ENCODE measurements at regions of chr2 and their contacts with region 1.

Region 1: GRCh38 chr2:30711646-30712085 is 95.6 kb downstream of the CAPN13 start:
- DNase-seq: peak; percentile 57 to 93 (median 81)
- ATAC-seq: peak; percentile 83 to 92 (median 87)
- H3K4me3 ChIP-seq: no peak overlapping the region
- H3K4me3 Mint-ChIP-seq: no peak overlapping the region
- H3K27ac ChIP-seq: no peak overlapping the region
- H3K27ac Mint-ChIP-seq: no peak overlapping the region
- H3K4me1 ChIP-seq: peaks cover 0 to 12% of the 10 kb centered on the region in 2 experiments
- H3K4me1 Mint-ChIP-seq: peaks cover 0 to 5% (median 5%) of the 10 kb centered on the region in 3 donors
- H3K27me3 ChIP-seq: peaks cover 0 to 16% of the 10 kb centered on the region in 2 experiments
- H3K27me3 Mint-ChIP-seq: peaks cover 0 to 2% of the 10 kb centered on the region in 2 donors

Region 2: GRCh38 chr2:30146438-30147147 is 565.1 kb before region 1 on chr2 and contains the start of gene YPEL5:
- CTCF ChIA-PET with region 1: interaction called in 1 of 2 experiments, 14 read pairs
- POLR2A ChIA-PET with region 1: interaction called in 1 of 2 experiments, 3 read pairs
- DNase-seq: peak; percentile 97 to 100 (median 100)
- ATAC-seq: peak; percentile 85 to 90 (median 88)
- H3K4me3 ChIP-seq: peak within 1 kb of the TSS; percentile 67 to 77
- H3K4me3 Mint-ChIP-seq: peak within 1 kb of the TSS; percentile 83 to 94 (median 84)
- H3K27ac ChIP-seq: peak within 1 kb of the TSS; percentile 99
- H3K27ac Mint-ChIP-seq: peak within 1 kb of the TSS; percentile 99 to 100
- H3K4me1 ChIP-seq: peaks cover 22 to 36% of the 10 kb centered on the region in 2 experiments
- H3K4me1 Mint-ChIP-seq: peaks cover 56 to 61% (median 58%) of the 10 kb centered on the region in 3 donors
- H3K27me3 ChIP-seq: no peaks in the 10 kb centered on the region
- H3K27me3 Mint-ChIP-seq: no peaks in the 10 kb centered on the region
- total RNA-seq, gene YPEL5: 73.0 to 962 (median 77.3) TPM

Region 3: GRCh38 chr2:30208452-30208851 is 503.2 kb before region 1 on chr2:
- CTCF ChIA-PET with region 1: interaction called, 9 to 65 read pairs
- POLR2A ChIA-PET with region 1: interaction called in 1 of 2 experiments, 3 read pairs
- DNase-seq: peak in 13 of 35 experiments; percentile 14 to 72 (median 28)
- ATAC-seq: peak; percentile 54 to 60 (median 57)
- H3K4me3 ChIP-seq: no peak overlapping the region
- H3K4me3 Mint-ChIP-seq: peak overlapping the region in 2 of 3 donors; percentile 18 to 74
- H3K27ac ChIP-seq: peak overlapping the region; percentile 25
- H3K27ac Mint-ChIP-seq: peak overlapping the region; percentile 81 to 85
- H3K4me1 ChIP-seq: peaks cover 14 to 17% of the 10 kb centered on the region in 2 experiments
- H3K4me1 Mint-ChIP-seq: peaks cover 23% of the 10 kb centered on the region in 3 donors
- H3K27me3 ChIP-seq: no peaks in the 10 kb centered on the region
- H3K27me3 Mint-ChIP-seq: no peaks in the 10 kb centered on the region

Region 4: GRCh38 chr2:30273261-30273861 is 438.3 kb before region 1 on chr2:
- CTCF ChIA-PET with region 1: interaction called, 4 to 12 read pairs
- POLR2A ChIA-PET with region 1: no interaction called
- DNase-seq: no peak
- ATAC-seq: no peak
- H3K4me3 ChIP-seq: no peak overlapping the region
- H3K4me3 Mint-ChIP-seq: no peak overlapping the region
- H3K27ac ChIP-seq: no peak overlapping the region
- H3K27ac Mint-ChIP-seq: peak overlapping the region in 1 of 2 donors; percentile 28
- H3K4me1 ChIP-seq: peaks cover under 1 to 12% of the 10 kb centered on the region in 2 experiments
- H3K4me1 Mint-ChIP-seq: peaks cover 39 to 59% (median 41%) of the 10 kb centered on the region in 3 donors
- H3K27me3 ChIP-seq: no peaks in the 10 kb centered on the region
- H3K27me3 Mint-ChIP-seq: no peaks in the 10 kb centered on the region

Region 5: GRCh38 chr2:31170071-31170698 is 458.5 kb after region 1 on chr2:
- CTCF ChIA-PET with region 1: interaction called, 5 to 24 read pairs
- POLR2A ChIA-PET with region 1: no interaction called
- DNase-seq: peak in 30 of 35 experiments; percentile 3 to 68 (median 22)
- ATAC-seq: peak; percentile 46 to 65 (median 54)
- H3K4me3 ChIP-seq: no peak overlapping the region
- H3K4me3 Mint-ChIP-seq: no peak overlapping the region
- H3K27ac ChIP-seq: no peak overlapping the region
- H3K27ac Mint-ChIP-seq: no peak overlapping the region
- H3K4me1 ChIP-seq: no peaks in the 10 kb centered on the region
- H3K4me1 Mint-ChIP-seq: peaks cover 0 to 2% (median 2%) of the 10 kb centered on the region in 3 donors
- H3K27me3 ChIP-seq: peaks cover 0 to 4% of the 10 kb centered on the region in 2 experiments
- H3K27me3 Mint-ChIP-seq: peaks cover 0 to 3% of the 10 kb centered on the region in 2 donors

Region 6: DNA sequence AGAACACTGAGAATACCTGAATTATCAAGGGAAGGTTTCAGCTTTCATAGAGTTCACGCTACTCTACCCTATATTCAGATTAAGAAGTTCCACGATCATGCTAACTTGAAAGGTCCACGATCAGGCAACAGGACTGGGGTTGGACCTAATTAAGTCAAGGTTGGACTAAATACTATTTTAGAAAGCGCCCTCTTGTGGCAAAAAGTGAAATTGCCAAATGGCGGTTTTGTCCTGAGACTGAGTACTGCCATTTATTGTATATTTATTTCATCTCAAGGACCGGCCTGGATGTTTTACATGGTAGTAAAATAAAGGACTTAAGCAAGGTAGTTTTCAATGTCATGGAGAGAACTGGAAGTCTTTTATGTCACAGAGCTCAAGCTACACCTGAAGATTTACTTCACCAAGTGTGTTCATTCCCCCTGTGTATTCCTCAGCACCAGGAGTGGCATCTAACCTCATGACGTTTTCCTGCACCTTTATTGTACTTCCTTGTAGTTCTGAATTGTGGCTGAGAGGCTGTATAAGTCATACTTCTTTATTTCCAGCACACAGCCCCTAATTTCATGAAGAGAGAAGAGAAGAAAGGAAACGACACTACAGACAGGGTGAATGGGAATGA is 812.3 kb after region 1 on chr2:
- CTCF ChIA-PET with region 1: interaction called, 5 to 15 read pairs
- POLR2A ChIA-PET with region 1: no interaction called
- DNase-seq: peak in 27 of 35 experiments; percentile 4 to 60 (median 33)
- ATAC-seq: no peak
- H3K4me3 ChIP-seq: no peak overlapping the region
- H3K4me3 Mint-ChIP-seq: no peak overlapping the region
- H3K27ac ChIP-seq: no peak overlapping the region
- H3K27ac Mint-ChIP-seq: no peak overlapping the region
- H3K4me1 ChIP-seq: no peaks in the 10 kb centered on the region
- H3K4me1 Mint-ChIP-seq: no peaks in the 10 kb centered on the region
- H3K27me3 ChIP-seq: peaks cover 0 to 8% of the 10 kb centered on the region in 2 experiments
- H3K27me3 Mint-ChIP-seq: peaks cover 22 to 26% of the 10 kb centered on the region in 2 donors